RWPE1 (cell line): ENCODE measurements at regions of chr5 and their contacts with region 1.

Region 1: GRCh38 chr5:142063878-142064331 is 44.7 kb upstream of the NDFIP1 start:
- DNase-seq: no peak
- H3K27ac ChIP-seq: no peak overlapping the region
- CTCF ChIP-seq: no peak

Region 2: DNA sequence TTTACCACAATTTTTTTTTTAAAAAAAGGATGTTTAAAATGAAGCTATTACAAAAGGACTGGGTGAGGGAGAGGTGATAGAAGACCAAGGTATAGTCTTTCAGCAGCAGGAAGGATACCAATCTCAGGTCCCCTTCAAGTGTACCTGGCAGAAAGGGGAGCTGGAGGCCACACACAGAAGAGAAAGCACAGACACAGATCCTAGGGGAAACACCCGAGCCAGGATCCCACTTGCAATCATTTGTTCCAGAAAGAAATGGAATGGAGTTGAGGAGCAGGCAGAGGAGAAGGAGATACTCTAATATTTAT is 56.7 kb before region 1 on chr5:
- CTCF ChIA-PET with region 1: no interaction called
- POLR2A ChIA-PET with region 1: no interaction called
- DNase-seq: no peak
- H3K27ac ChIP-seq: no peak overlapping the region
- CTCF ChIP-seq: no peak

Region 3: DNA sequence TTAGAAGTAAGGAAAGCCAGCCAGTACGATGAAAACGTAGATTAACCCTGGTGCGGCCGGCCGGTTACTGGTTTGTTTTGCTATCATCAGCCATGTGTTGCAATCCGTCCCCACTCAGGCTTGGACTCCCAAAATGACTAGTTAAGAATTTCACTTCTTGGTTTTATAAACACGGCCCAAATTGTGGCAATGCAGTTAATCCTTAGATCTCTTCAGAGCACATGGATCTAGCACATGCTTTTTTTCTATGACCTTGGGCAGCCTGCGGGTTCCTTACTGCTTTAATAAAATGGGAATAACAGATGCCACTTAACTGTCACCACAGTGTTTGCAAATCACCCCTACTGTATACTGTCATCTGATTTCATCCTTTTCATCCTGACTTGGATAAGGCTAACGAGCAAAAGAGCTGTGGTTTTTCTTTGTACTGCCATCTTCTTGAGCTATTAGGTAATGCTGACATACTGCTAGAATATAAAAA is 46.2 kb after region 1 on chr5:
- CTCF ChIA-PET with region 1: interaction called, 10 read pairs
- POLR2A ChIA-PET with region 1: no interaction called
- DNase-seq: peak; percentile 36
- H3K27ac ChIP-seq: no peak overlapping the region
- CTCF ChIP-seq: peak; percentile 29